ENCODE measurements at regions of chr1 and their contacts with region 1.

Region 1: GRCh38 chr1:67149179-67149770 is 14.5 kb upstream of the C1orf141 start:
- DNase-seq: peak; percentile 85
- H3K4me3 Mint-ChIP-seq: no peak overlapping the region
- H3K27ac Mint-ChIP-seq: no peak overlapping the region
- H3K4me1 Mint-ChIP-seq: peaks cover 42% of the 10 kb centered on the region
- H3K27me3 Mint-ChIP-seq: peaks cover 5% of the 10 kb centered on the region

Region 2: GRCh38 chr1:66764994-66765578 is 384.2 kb before region 1 on chr1:
- CTCF ChIA-PET with region 1: interaction called, 37 read pairs
- intact Hi-C with region 1: loop called (anchors 1 kb)
- DNase-seq: peak; percentile 80
- H3K4me3 Mint-ChIP-seq: no peak overlapping the region
- H3K27ac Mint-ChIP-seq: no peak overlapping the region
- H3K4me1 Mint-ChIP-seq: peaks cover 22% of the 10 kb centered on the region
- H3K27me3 Mint-ChIP-seq: no peaks in the 10 kb centered on the region

Region 3: DNA sequence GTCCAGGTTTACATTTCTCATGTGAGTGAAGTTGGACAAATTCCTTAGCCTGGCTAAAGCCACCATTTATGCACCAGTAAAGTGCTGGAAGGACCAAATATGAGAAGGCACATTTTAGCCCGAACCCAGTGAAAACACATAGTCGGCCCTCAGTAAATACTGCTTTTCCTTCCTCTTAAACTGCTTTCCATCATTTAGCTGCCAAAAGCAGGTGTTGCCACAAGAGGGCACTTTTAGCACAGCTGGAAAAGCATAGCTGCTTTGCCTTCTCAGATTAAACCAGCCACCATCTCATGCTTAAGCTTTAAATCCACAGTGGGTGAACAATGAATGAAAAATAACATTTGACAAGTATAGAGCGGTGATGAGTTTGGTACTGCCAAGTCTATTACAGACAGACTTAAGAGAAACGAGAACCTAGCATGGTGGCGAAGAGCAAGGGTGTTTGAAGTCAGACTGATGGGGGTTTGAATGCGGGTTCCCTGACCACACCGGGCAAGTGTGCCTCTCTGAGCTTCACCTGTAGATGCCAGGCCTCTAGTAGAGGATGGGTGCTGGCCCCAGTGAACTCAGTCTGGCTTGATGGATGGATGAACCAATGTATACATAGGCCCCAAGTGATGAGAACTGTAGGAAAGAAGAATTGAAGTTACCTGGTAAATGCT is 153.1 kb before region 1 on chr1:
- CTCF ChIA-PET with region 1: interaction called, 73 read pairs
- intact Hi-C with region 1: loop called (anchors 1 kb)
- DNase-seq: peak; percentile 89
- H3K4me3 Mint-ChIP-seq: no peak overlapping the region
- H3K27ac Mint-ChIP-seq: no peak overlapping the region
- H3K4me1 Mint-ChIP-seq: peaks cover 26% of the 10 kb centered on the region
- H3K27me3 Mint-ChIP-seq: no peaks in the 10 kb centered on the region

Region 4: DNA sequence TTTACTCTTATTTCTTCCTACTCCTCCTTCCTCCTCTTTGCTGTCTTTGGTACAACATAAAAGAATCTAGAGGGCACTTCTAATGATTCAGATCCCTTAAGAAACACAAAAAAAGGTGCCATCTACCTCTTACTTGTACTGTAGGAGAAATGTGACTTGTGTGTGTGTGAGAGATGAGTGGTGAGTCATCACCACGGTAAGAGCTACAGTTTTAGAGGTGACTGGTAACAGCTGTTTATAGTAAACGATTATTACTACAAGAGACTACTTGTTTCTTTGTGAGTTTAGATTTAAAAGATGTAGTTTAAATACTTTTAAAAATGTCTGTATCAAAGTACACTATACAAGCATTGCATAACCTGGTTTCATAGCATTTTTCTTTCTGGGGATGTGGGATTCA is 135.7 kb before region 1 on chr1:
- CTCF ChIA-PET with region 1: interaction called, 16 read pairs
- intact Hi-C with region 1: no loop called
- DNase-seq: peak; percentile 18
- H3K4me3 Mint-ChIP-seq: no peak overlapping the region
- H3K27ac Mint-ChIP-seq: no peak overlapping the region
- H3K4me1 Mint-ChIP-seq: peaks cover 15% of the 10 kb centered on the region
- H3K27me3 Mint-ChIP-seq: no peaks in the 10 kb centered on the region

Region 5: GRCh38 chr1:67105508-67105907 is 43.8 kb before region 1 on chr1:
- CTCF ChIA-PET with region 1: interaction called, 21 read pairs
- intact Hi-C with region 1: no loop called
- DNase-seq: no peak
- H3K4me3 Mint-ChIP-seq: no peak overlapping the region
- H3K27ac Mint-ChIP-seq: no peak overlapping the region
- H3K4me1 Mint-ChIP-seq: peaks cover 3% of the 10 kb centered on the region
- H3K27me3 Mint-ChIP-seq: no peaks in the 10 kb centered on the region

Region 6: GRCh38 chr1:67162957-67163356 is 13.7 kb after region 1 on chr1:
- CTCF ChIA-PET with region 1: interaction called, 16 read pairs
- intact Hi-C with region 1: no loop called
- DNase-seq: peak; percentile 76
- H3K4me3 Mint-ChIP-seq: peak overlapping the region; percentile 42
- H3K27ac Mint-ChIP-seq: peak overlapping the region; percentile 83
- H3K4me1 Mint-ChIP-seq: peaks cover 63% of the 10 kb centered on the region
- H3K27me3 Mint-ChIP-seq: no peaks in the 10 kb centered on the region

Measured in activated naive CD4-positive, alpha-beta T cell treated with anti-CD3 and anti-CD28 coated beads for 36 hours (primary cell).